ENCODE measurements at regions of chr5 and their contacts with region 1.

Region 1: GRCh38 chr5:174951146-174951780 is 226.9 kb downstream of the MSX2 start:
- DNase-seq: peak; percentile 54 to 75 (median 66)
- H3K4me3 ChIP-seq: no peak overlapping the region
- H3K27ac ChIP-seq: no peak overlapping the region
- H3K4me1 ChIP-seq: no peaks in the 10 kb centered on the region
- H3K27me3 ChIP-seq: peaks cover 8% of the 10 kb centered on the region
- CTCF ChIP-seq: peak; percentile 75 to 89 (median 86)
- POLR2A ChIP-seq: no peak

Region 2: DNA sequence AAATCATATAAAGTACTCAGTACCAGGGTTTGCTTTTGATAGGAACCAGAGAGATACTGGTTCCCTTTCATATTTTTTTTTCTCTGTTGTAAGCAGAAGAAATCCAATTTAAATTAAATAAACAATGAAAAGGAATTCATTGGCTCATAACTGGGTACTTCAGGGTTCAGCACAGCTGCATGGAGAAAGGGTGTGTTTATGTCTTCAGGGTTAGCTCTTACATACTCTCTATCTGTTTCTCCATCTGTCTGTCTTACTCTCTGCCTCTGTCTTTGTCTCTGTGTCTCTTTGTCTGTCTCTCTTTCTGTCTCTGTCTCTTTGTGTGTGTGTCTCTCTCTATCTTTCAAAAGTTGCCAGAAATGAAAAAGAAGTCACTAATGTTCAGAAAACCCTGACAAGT is 119.0 kb after region 1 on chr5:
- intact Hi-C with region 1: no loop called
- DNase-seq: no peak
- H3K4me3 ChIP-seq: no peak overlapping the region
- H3K27ac ChIP-seq: no peak overlapping the region
- H3K4me1 ChIP-seq: no peaks in the 10 kb centered on the region
- H3K27me3 ChIP-seq: no peaks in the 10 kb centered on the region
- CTCF ChIP-seq: no peak
- POLR2A ChIP-seq: no peak

Region 3: GRCh38 chr5:175317872-175318271 is 366.6 kb after region 1 on chr5:
- intact Hi-C with region 1: no loop called
- DNase-seq: no peak
- H3K4me3 ChIP-seq: no peak overlapping the region
- H3K27ac ChIP-seq: no peak overlapping the region
- H3K4me1 ChIP-seq: no peaks in the 10 kb centered on the region
- H3K27me3 ChIP-seq: no peaks in the 10 kb centered on the region
- CTCF ChIP-seq: no peak
- POLR2A ChIP-seq: no peak

Region 4: DNA sequence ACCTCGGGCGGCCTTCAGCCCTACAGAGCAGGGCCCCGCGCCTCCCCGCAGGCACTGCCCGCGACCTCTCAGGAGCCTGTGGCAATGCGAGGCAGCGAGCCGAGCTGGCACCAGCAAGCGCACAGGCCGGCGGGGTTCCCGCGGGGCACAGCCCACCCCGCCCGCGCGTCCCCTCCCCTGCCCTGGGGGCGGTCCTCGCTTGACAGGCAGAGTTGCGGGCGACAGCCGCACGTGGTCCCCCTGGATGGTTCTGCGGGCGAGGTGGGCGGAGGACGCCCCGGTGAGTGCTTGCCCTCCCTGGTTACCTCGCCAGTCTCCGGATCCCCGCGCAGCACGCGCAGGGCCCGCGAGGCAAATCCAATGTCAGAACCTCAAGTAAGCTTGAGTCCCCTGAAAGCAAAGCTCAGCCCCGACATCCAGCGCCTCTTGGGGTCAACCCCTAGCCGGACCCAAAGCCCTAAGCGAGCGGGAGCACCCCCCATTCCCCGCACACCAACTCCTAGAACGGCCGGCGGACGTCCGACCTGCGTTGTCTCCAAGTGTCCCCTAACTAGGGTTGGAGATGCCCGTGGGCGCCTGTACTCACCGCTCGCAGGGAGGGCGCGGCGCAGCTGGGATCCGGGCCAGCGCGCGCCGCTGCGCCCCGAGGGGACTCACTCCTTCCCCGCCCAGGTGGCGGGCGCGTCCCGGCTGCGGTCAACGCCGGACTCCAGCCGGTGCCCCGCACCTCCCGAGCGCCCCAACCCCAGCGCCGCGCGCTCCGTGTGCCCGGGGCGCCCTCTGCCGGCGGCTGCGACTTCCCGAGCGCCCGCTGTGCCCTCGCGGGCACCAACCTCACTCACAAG is 493.0 kb after region 1 on chr5 and contains the start of gene DRD1:
- intact Hi-C with region 1: loop called (anchors 2 to 5 kb)
- DNase-seq: peak in 4 of 7 donors; percentile 23 to 49 (median 36)
- H3K4me3 ChIP-seq: peak within 1 kb of the TSS in 1 of 4 donors; percentile 48
- H3K27ac ChIP-seq: no peak within 1 kb of the TSS
- H3K4me1 ChIP-seq: peaks cover 0 to 11% of the 10 kb centered on the region in 2 donors
- H3K27me3 ChIP-seq: peaks cover 31% of the 10 kb centered on the region
- CTCF ChIP-seq: peak in 5 of 6 experiments; percentile 13 to 78 (median 67)
- POLR2A ChIP-seq: no peak
- total RNA-seq, gene DRD1: under 0.01 to 1.3 (median 0.35) TPM

Region 5: DNA sequence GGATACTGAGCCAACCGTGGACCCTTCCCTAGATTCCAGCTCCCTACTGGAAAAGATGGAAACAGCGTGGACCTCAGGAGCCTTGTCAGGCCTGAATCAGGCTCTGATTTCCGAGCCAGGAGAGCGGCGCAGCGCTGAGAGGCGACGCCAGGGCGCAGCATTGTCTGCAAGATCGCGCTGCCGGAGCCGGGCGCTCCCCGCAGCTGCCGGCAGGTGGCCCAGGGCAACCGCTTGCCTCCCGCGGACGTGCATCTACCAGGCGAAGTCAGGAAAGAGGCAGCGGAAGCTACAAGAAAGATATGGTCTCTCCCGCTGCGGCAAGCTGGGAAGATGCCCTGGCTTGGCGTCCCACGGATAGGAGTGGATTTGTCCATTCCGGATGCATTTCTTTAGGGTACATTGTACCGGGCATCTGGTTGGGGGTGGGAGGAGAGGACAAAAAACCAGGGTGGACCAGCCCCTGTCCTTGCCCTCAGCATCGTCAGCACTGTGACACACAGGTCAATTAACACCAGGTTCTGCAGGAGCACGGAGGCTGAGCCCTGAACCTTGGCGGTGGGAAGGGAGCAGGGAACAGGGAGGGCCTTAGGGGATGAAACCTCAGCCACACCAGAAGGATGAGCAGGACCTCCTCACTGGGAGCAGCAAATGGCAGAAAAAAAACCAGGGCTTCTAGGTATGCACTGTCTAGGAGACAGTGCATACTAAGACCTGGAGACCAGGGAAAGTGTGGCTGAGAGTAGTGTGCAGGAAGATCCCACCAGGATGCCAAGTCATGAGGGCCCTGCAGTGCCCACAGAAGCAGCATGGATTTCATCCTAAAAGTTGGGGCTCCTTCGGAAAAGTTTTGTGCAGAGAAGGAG is 583.0 kb after region 1 on chr5:
- intact Hi-C with region 1: no loop called
- DNase-seq: peak; percentile 73 to 92 (median 78)
- H3K4me3 ChIP-seq: no peak overlapping the region
- H3K27ac ChIP-seq: no peak overlapping the region
- H3K4me1 ChIP-seq: no peaks in the 10 kb centered on the region
- H3K27me3 ChIP-seq: peaks cover 4% of the 10 kb centered on the region
- CTCF ChIP-seq: peak; percentile 90 to 99 (median 98)
- POLR2A ChIP-seq: no peak

Measured in adrenal gland (tissue), 19 donors.